ENCODE measurements at regions of chr9 and their contacts with region 1.

Region 1: GRCh38 chr9:124420991-124421543 is 5.8 kb upstream of the PSMB7 start:
- DNase-seq: peak; percentile 53
- H3K4me3 ChIP-seq: no peak overlapping the region
- H3K27ac ChIP-seq: no peak overlapping the region
- H3K4me1 ChIP-seq: peaks cover 0 to 6% (median 1%) of the 10 kb centered on the region in 4 donors
- H3K27me3 ChIP-seq: no peaks in the 10 kb centered on the region
- CTCF ChIP-seq: no peak
- EP300 ChIP-seq: no peak
- POLR2A ChIP-seq: no peak

Region 2: GRCh38 chr9:124436320-124436719 is 15.3 kb after region 1 on chr9:
- intact Hi-C with region 1: no loop called
- DNase-seq: no peak
- H3K4me3 ChIP-seq: no peak overlapping the region
- H3K27ac ChIP-seq: no peak overlapping the region
- H3K4me1 ChIP-seq: no peaks in the 10 kb centered on the region
- H3K27me3 ChIP-seq: peaks cover 0 to 3% (median 0%) of the 10 kb centered on the region in 3 donors
- CTCF ChIP-seq: no peak
- EP300 ChIP-seq: no peak
- POLR2A ChIP-seq: no peak

Region 3: DNA sequence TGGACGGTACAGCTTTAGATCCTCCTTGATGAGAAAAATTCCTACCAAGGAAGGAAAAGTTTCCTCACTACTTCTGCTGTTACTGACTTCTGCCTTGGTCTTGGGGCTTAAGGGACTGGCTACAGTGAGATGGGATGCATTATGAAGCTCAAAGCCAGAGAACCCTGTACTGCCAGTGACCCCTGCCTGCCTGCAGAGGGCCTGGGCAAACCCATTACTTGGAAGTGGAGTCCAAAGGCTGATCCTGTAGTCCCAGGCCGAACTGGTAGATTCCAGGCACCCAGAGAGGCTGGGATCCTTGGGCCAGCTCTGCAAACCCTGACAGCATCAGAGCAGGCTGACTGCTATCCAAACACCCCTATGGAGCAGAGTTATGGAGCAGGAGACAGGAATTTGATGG is 111.8 kb after region 1 on chr9:
- intact Hi-C with region 1: loop called (anchors 10 kb)
- DNase-seq: no peak
- H3K4me3 ChIP-seq: no peak overlapping the region
- H3K27ac ChIP-seq: no peak overlapping the region
- H3K4me1 ChIP-seq: no peaks in the 10 kb centered on the region
- H3K27me3 ChIP-seq: no peaks in the 10 kb centered on the region
- CTCF ChIP-seq: no peak
- EP300 ChIP-seq: no peak
- POLR2A ChIP-seq: no peak

Measured in sigmoid colon (tissue), 7 donors.